PC-3 (cell line): ENCODE measurements at regions of chr11 and their contacts with region 1.

Region 1: DNA sequence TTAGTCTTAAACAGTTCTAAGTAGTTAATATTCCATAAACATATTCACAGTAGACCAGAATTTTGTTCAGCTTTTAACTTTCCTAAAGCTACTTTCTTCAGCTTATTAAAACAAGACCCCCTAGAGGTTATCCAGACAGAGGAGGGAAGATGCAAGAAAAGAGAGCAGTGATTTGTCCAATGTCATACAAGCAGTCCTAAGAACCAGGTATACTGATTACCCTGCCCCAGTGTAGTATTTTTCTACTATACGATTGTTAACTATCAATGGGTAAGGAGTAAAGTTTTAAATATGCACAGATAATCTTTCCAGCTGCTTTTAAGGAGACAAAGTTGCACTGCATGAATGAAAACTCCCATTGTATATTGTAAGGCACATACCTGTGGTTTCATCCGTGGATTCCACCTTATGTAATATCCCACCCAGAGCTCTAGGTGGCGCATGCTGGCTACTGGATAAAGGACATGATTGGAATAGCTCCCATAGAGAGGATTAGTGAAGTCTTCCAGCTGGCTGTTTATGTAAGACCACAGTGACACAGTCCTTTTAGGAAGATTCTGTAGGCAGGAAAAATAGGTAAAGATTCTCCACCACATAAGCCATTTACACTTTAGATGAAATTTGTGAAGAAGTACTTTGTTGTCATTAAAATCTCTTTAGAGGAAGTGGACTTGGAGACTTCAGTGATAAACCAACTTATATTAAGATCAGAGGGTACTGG is 45.6 kb downstream of the CEP57 start:
- DNase-seq: peak; percentile 94
- ATAC-seq: peak; percentile 61
- H3K4me3 ChIP-seq: no peak overlapping the region
- H3K27ac ChIP-seq: no peak overlapping the region
- H3K4me1 ChIP-seq: peaks cover 38% of the 10 kb centered on the region
- H3K27me3 ChIP-seq: no peaks in the 10 kb centered on the region
- CTCF ChIP-seq: peak; percentile 99

Region 2: DNA sequence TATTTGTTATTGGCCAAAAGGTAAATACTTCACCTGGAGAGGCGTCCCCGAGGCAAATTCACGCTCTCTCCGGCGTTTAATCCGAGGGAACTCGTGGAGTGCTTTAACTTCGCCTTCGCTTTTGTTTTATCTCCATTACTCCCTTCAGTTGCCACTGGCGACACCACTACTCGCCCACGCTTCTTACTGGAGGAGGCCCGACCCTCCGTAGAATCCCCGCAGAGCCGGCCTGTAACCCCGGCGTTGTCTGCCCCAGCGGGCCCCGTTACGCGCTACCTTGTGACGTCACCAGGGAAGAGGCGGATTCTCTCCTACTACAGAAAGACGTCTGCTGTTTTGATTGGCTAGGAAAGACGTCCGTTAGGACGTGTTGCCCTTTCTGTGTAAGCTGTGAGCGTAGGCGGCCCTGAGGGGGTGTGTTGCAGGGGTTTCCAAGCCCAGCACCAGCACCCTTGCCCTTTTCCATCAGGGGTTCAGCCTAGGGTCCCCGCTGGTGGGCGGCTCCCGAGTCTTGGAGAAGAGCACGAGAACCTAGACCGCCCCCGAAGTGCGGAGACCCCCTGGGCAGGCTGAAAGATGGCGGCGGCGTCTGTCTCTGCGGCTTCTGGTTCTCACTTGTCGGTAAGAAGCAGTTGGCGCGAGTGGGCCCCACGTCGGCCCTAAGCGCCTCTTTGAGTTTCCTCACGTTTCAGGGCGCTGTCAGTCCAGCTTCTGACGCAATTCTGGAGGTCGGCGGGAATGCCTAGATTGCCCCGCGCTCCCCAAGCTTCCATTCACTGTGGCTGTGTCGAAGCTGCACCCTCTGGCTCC is 45.6 kb before region 1 on chr11 and contains the start of gene CEP57:
- CTCF ChIA-PET with region 1: no interaction called
- POLR2A ChIA-PET with region 1: no interaction called
- intact Hi-C with region 1: loop called (anchors 1 kb)
- DNase-seq: peak; percentile 99
- ATAC-seq: peak; percentile 73
- H3K4me3 ChIP-seq: peak within 1 kb of the TSS; percentile 86
- H3K27ac ChIP-seq: peak within 1 kb of the TSS; percentile 87
- H3K4me1 ChIP-seq: peaks cover 42% of the 10 kb centered on the region
- H3K27me3 ChIP-seq: no peaks in the 10 kb centered on the region
- CTCF ChIP-seq: no peak
- total RNA-seq, gene CEP57: 36.7 and 38.1 TPM in 2 replicates

Region 3: GRCh38 chr11:95800438-95800837 is 35.5 kb before region 1 on chr11:
- CTCF ChIA-PET with region 1: no interaction called
- POLR2A ChIA-PET with region 1: no interaction called
- intact Hi-C with region 1: no loop called
- DNase-seq: no peak
- ATAC-seq: no peak
- H3K4me3 ChIP-seq: no peak overlapping the region
- H3K27ac ChIP-seq: no peak overlapping the region
- H3K4me1 ChIP-seq: no peaks in the 10 kb centered on the region
- H3K27me3 ChIP-seq: no peaks in the 10 kb centered on the region
- CTCF ChIP-seq: no peak

Region 4: DNA sequence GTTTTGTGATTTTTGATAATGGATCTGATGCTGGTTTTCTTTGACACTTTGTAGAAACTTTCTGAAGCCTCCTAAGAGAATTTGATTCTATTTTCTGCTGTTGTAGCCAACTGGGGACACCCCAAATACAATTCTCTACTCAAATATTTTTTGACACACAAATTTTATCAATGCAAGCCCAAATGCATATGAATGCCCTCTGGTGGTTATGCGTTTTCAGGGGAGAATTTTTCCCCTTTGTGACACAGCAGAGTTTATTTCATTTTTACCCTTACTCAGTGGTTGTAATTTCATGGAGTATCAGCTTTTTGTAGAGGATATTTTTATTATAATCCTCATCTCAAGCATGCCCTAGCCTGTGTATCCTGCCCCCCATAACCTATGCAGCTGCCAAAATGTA is 132.7 kb after region 1 on chr11:
- CTCF ChIA-PET with region 1: interaction called, 3 read pairs
- POLR2A ChIA-PET with region 1: no interaction called
- intact Hi-C with region 1: loop called (anchors 1 kb)
- DNase-seq: peak; percentile 56
- ATAC-seq: no peak; the same call in 1 of the 2 replicates
- H3K4me3 ChIP-seq: no peak overlapping the region
- H3K27ac ChIP-seq: no peak overlapping the region
- H3K4me1 ChIP-seq: no peaks in the 10 kb centered on the region
- H3K27me3 ChIP-seq: no peaks in the 10 kb centered on the region
- CTCF ChIP-seq: peak; percentile 80

Region 5: DNA sequence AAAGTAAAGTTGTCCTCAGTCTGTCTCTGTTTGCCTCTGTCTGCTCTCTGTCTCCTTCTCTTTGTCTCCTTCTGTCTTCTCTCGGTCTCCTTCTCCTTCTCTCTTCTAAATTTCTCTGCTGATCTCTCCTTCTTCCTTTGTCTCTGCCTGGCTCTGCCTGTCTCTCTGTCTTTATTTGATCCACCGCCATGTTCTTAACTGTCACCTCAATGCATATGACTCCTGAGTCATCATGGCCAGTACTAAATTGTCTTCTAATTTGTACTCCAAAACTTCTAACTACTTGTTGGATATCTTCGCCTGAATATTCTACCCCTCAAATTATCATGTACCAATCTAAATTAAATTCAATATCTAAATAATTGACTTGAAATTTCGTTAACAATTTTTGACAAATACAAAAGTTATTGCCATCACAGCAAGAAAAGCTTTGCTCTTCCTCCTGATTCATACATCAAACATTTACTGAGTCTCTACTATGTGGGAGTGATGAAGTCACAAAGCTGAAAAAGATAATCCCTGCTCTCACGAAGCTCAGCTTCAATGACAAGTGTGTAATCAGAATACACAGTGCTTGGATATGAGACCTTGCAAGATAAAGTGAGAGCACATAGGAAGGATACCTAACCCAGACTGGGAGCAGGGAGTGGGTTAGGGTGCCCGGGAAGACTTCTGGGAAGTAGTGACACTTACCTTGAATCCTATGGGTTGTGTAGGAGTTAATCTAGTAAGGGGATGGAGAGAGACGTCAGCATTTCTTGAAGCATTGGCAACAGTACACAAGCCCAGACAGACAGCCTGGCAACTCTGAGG is 314.0 kb after region 1 on chr11:
- CTCF ChIA-PET with region 1: no interaction called
- POLR2A ChIA-PET with region 1: no interaction called
- intact Hi-C with region 1: loop called (anchors 5 kb)
- DNase-seq: peak; percentile 77
- ATAC-seq: peak; percentile 47
- H3K4me3 ChIP-seq: no peak overlapping the region
- H3K27ac ChIP-seq: peak overlapping the region; percentile 88
- H3K4me1 ChIP-seq: peaks cover 52% of the 10 kb centered on the region
- H3K27me3 ChIP-seq: no peaks in the 10 kb centered on the region
- CTCF ChIP-seq: no peak

Region 6: GRCh38 chr11:96424693-96425092 is 588.8 kb after region 1 on chr11:
- CTCF ChIA-PET with region 1: no interaction called
- POLR2A ChIA-PET with region 1: no interaction called
- intact Hi-C with region 1: loop called (anchors 1 kb)
- DNase-seq: peak; percentile 61
- ATAC-seq: no peak
- H3K4me3 ChIP-seq: no peak overlapping the region
- H3K27ac ChIP-seq: no peak overlapping the region
- H3K4me1 ChIP-seq: 0 out of 2 replicates have a peak, but pooled peaks cover 7% of the 10 kb centered on the region
- H3K27me3 ChIP-seq: peaks cover 18% of the 10 kb centered on the region
- CTCF ChIP-seq: no peak